SK-N-SH (cell line): ENCODE measurements at regions of chr3 and their contacts with region 1.

Region 1: DNA sequence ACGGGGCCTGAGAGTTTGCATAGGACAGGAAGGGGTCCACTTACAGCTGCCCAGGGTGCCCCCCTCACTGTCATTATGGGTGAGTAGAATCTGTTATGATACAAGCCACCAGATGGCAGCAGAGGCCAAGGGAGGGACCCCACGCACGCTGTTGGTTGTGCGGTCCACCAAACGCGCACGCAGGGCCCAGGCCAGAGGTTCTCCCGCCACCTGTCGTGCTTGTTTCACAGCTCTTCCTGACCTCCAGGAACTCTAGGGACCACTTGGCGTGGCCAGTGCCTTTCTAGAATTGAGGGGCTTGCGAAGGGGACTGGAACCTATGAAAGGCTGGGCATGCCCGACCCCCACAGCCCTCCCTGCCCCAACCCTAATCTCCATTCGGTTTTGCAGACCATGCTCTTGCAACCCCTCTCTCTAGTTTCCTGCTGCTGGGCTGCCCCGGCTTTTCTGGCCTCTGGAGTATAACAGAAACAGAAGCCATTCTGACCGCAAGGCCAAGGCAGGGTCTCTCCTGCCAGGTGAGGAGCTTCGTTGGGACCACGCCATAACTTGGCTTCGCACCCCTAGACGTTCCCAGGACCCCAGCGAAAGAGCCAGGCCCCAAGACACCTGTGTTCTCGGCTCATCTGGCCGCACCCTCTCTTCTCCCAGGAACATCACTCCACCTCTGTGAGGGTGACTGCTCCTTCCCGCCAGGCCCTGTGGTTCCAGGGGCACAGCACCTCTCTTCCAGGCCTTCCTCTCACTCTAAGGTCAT is 46.0 kb downstream of the ALDH1L1 start:
- DNase-seq: peak; percentile 87
- H3K4me3 ChIP-seq: no peak overlapping the region; a peak in 1 of 4 replicates
- H3K27ac ChIP-seq: no peak overlapping the region
- H3K4me1 ChIP-seq: peaks cover 0 to 7% of the 10 kb centered on the region in 2 experiments; a peak in 1 of 4 replicates
- H3K27me3 ChIP-seq: no peaks in the 10 kb centered on the region
- CTCF ChIP-seq: peak; percentile 75
- EP300 ChIP-seq: no peak
- RAD21 ChIP-seq: peak; percentile 92

Region 2: DNA sequence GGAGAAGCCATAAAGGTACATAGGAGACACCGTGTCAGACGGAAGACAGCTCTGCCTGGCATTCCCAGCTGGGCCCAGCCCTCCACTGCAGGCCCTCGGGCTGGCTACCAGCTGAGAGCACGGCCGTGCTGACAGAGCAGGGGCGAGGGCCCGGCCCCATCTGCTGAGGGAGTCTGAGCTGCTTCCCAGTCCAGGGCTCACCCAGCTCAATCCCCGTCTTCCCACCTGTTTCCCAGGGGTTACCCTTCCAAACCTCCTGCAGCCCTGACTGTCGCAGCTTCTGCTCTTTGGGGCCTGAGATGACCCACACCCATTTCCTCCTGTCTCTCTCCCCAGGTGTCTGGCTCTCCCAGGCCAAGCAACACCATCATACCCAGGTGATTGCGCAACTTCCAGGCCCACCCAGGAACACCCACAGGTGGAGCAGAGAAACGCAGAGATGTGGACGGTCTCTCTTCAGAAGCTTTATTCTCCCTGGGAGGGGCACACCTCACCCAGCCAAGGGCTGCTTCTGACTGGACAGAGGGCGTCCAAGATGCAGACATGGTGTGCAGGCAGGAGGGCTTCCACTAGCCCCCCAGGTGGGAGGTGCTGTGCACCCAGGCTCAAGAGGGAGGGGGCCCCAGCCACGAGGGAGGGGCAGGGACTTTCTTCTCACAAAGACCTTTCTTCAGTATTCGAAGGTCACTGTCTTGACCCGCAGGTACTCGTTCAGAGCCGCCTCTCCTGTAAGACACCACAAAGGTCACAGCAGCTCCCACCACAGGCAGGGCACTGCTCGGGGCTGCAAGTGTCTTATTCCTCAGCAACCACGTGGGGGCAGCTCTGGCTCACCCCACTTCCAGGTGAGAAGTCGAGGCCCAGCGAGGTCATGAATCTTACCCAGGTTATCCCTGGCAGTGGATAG is 31.0 kb before region 1 on chr3:
- CTCF ChIA-PET with region 1: interaction called, 12 read pairs
- POLR2A ChIA-PET with region 1: no interaction called
- DNase-seq: peak; percentile 24
- H3K4me3 ChIP-seq: no peak overlapping the region
- H3K27ac ChIP-seq: no peak overlapping the region
- H3K4me1 ChIP-seq: peaks cover 0 to 17% of the 10 kb centered on the region in 2 experiments; a peak in 1 of 4 replicates
- H3K27me3 ChIP-seq: no peaks in the 10 kb centered on the region
- CTCF ChIP-seq: no peak
- EP300 ChIP-seq: no peak
- RAD21 ChIP-seq: no peak

Region 3: DNA sequence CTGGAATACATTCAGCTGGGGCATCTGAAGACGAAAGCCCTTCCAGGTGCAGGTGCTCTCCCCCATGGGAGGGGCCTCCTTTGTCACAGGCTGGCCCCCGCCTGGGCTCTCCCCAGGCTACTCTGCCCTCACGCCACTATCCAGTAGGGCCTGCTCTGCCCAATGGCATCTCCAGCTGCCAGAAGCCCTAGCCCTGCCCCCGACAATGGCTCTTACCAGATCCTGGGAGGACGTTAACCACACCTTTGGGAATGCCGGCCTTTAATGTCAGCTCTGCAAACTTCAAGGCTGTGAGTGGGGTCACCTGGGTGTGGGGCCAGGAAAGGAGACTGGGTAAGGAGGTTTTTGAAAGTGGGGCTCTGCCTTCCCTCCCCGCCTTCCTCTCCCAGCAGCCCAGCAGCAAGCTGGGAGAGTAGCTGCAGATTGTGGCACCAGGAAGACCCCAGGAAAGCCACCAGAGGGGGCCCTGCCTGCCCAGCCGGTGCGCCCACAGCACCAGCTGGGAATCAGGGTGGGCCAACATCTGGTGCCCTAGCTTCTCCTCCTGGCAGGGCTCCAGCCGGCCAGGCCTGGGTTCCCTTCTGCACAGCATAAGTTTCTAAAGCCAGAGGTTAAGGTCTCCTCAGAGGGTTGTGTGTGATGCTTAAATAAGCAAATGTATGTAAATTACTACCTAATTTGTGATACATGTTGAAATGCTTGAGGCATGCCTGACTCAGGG is 10.1 kb before region 1 on chr3:
- CTCF ChIA-PET with region 1: interaction called, 60 read pairs
- POLR2A ChIA-PET with region 1: no interaction called
- DNase-seq: peak; percentile 83
- H3K4me3 ChIP-seq: no peak overlapping the region
- H3K27ac ChIP-seq: no peak overlapping the region
- H3K4me1 ChIP-seq: peaks cover 0 to 22% of the 10 kb centered on the region in 2 experiments; a peak in 1 of 4 replicates
- H3K27me3 ChIP-seq: no peaks in the 10 kb centered on the region
- CTCF ChIP-seq: no peak
- EP300 ChIP-seq: no peak
- RAD21 ChIP-seq: peak; percentile 23; the same call in 1 of the 2 replicates

Region 4: GRCh38 chr3:126170073-126170777 is 35.8 kb after region 1 on chr3:
- CTCF ChIA-PET with region 1: interaction called, 16 read pairs
- POLR2A ChIA-PET with region 1: no interaction called
- DNase-seq: no peak
- H3K4me3 ChIP-seq: no peak overlapping the region
- H3K27ac ChIP-seq: no peak overlapping the region
- H3K4me1 ChIP-seq: no peaks in the 10 kb centered on the region; a peak in 1 of 4 replicates
- H3K27me3 ChIP-seq: no peaks in the 10 kb centered on the region; the same call in 1 of the 2 replicates
- CTCF ChIP-seq: no peak
- EP300 ChIP-seq: no peak
- RAD21 ChIP-seq: no peak

Region 5: GRCh38 chr3:126197854-126198584 is 63.6 kb after region 1 on chr3:
- CTCF ChIA-PET with region 1: interaction called, 122 read pairs
- POLR2A ChIA-PET with region 1: no interaction called
- DNase-seq: peak; percentile 76
- H3K4me3 ChIP-seq: no peak overlapping the region
- H3K27ac ChIP-seq: no peak overlapping the region
- H3K4me1 ChIP-seq: peaks cover 8 to 9% of the 10 kb centered on the region in 2 experiments; a peak in 2 of 4 replicates
- H3K27me3 ChIP-seq: no peaks in the 10 kb centered on the region
- CTCF ChIP-seq: peak; percentile 66
- EP300 ChIP-seq: no peak
- RAD21 ChIP-seq: peak; percentile 68

Region 6: GRCh38 chr3:126259411-126260391 is 125.3 kb after region 1 on chr3:
- CTCF ChIA-PET with region 1: interaction called, 15 read pairs
- POLR2A ChIA-PET with region 1: no interaction called
- DNase-seq: peak; percentile 79
- H3K4me3 ChIP-seq: no peak overlapping the region
- H3K27ac ChIP-seq: no peak overlapping the region
- H3K4me1 ChIP-seq: peaks cover 3 to 4% of the 10 kb centered on the region in 2 experiments; a peak in 2 of 4 replicates
- H3K27me3 ChIP-seq: no peaks in the 10 kb centered on the region
- CTCF ChIP-seq: peak; percentile 45
- EP300 ChIP-seq: no peak
- RAD21 ChIP-seq: peak; percentile 73